Ascending aorta (tissue), 2 donors: ENCODE measurements at regions of chr19 and their contacts with region 1.

Region 1: GRCh38 chr19:22532388-22533300 is 101.5 kb upstream of the ZNF492 start:
- DNase-seq: peak; percentile 95 to 98
- H3K4me3 ChIP-seq: peak overlapping the region; percentile 47 to 81
- H3K27ac ChIP-seq: peak overlapping the region; percentile 69 to 89
- H3K4me1 ChIP-seq: peaks cover 0 to 9% of the 10 kb centered on the region in 2 donors
- H3K27me3 ChIP-seq: no peaks in the 10 kb centered on the region
- CTCF ChIP-seq: peak in 2 of 3 experiments; percentile 6 to 38

Region 2: DNA sequence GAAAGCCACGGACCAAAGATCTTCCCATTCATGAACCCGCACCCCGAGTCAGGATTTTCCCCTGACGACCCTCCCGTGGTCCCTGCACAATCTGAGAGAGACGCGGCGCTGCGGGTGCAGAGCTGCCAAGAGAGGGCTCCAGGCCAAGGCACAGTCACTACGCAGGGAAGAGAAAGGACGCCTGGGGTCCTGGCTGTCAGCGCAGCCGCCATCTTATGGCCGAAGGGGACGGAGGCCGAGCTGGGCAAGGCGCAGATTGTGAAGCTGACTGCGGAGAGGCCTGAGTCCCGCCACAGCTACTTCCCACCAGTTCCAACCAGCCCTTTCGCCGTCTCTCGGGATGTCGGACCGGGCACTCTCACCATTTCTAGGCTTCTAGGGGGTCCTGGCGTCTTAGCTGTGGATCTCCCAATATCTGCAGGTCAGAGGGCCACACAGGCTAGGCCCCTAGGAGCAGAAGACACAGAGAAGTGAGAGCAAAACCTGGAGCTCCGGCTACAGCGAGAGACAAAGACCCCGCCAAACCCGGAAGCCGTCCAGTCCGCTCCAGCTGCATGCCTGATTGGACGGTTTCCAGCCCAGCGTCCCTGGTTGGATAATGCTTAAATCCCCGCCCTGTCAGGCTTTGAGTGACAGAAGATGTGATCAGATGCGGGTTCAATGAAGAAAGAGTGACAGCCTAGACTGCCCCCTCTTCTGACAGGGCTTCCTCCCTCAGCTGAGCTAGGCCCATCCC is 765.4 kb before region 1 on chr19 and contains the start of gene ZNF100:
- intact Hi-C with region 1: loop called (anchors 5 kb)
- DNase-seq: peak; percentile 76 to 96
- H3K4me3 ChIP-seq: peak within 1 kb of the TSS; percentile 59 to 86
- H3K27ac ChIP-seq: peak within 1 kb of the TSS; percentile 88 to 89
- H3K4me1 ChIP-seq: peaks cover 0 to 3% of the 10 kb centered on the region in 2 donors
- H3K27me3 ChIP-seq: no peaks in the 10 kb centered on the region
- CTCF ChIP-seq: no peak
- total RNA-seq, gene ZNF100: 4.2 TPM

Region 3: DNA sequence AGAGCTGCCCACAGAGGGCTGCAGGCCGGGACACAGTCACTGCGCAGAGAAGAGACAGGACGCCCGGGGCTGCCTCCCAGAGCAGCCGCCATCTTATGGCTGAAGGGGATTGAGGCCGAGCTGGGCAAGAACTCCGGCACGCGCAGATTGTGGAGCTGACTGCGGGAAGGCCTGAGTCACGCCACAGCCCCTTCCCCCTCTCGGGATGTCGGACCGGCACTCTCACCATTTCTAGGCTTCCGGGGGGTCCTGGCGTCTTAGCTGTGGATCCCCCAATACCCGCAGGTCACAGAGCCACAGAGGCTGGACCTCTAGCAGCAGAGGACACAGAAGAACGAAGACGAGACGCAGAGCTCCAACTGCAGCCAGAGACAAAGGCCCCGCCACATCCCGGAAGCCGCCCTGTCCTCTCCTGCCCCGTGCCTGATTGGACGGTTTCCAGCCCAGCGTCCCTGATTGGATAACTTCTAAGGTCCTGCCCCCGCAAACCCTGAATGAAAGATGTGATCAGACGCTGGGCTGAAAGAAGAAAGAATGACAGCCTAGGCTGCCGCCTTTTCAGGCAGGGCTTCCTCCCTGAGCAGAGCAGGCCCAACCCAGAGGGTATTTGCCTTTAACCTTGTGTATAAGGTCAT is 696.7 kb before region 1 on chr19 and contains the start of gene ZNF43:
- intact Hi-C with region 1: loop called (anchors 5 kb)
- DNase-seq: peak; percentile 93 to 98
- H3K4me3 ChIP-seq: peak within 1 kb of the TSS; percentile 88 to 91
- H3K27ac ChIP-seq: peak within 1 kb of the TSS; percentile 77 to 91
- H3K4me1 ChIP-seq: peaks cover 3 to 7% of the 10 kb centered on the region in 2 donors
- H3K27me3 ChIP-seq: no peaks in the 10 kb centered on the region
- CTCF ChIP-seq: no peak
- total RNA-seq, gene ZNF43: 8.4 TPM

Region 4: DNA sequence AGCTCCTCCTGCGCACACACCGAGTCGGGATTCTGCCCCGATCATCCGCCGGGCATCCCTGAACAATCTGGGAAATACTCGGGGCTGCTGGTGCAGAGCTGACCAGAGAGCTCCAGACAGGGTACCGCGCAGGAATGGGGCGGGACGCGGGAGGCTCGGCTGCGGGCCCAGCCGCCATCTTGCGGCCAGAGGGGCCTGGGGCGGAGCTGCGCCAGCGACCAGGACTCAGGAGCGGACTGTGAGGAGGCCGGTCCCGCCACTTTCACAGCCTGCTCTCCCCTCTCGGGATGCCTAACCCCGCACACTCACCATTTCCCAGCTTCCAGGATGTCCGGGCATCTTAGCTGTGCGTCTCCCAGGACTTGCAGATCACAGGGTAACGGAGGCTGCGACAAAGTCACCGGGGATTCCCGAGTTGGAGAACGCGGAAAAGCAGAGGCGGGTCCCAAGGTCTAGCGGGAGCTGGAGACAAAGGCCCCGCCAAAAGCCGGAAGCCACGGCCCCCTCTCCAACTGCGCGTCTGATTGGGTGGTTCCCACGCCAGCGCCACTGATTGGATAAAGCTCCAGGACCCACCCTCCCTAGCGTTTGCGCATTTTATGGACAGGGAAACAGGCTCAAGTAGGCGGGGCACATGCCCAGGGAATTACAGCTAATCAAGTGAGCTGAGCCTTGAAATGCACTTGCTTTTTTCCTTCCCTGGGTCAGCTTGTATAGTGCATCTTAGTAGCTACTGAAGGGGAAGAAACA is 680.9 kb before region 1 on chr19:
- intact Hi-C with region 1: loop called (anchors 5 kb)
- DNase-seq: peak; percentile 85 to 98
- H3K4me3 ChIP-seq: peak overlapping the region; percentile 80 to 81
- H3K27ac ChIP-seq: peak overlapping the region; percentile 74 to 81
- H3K4me1 ChIP-seq: peaks cover 0 to 9% of the 10 kb centered on the region in 2 donors
- H3K27me3 ChIP-seq: no peaks in the 10 kb centered on the region
- CTCF ChIP-seq: peak in 1 of 3 experiments; percentile 1

Region 5: GRCh38 chr19:22622901-22623840 is 90.5 kb after region 1 on chr19:
- intact Hi-C with region 1: loop called (anchors 5 kb)
- DNase-seq: peak in 1 of 2 donors; percentile 74
- H3K4me3 ChIP-seq: peak overlapping the region; percentile 43 to 85
- H3K27ac ChIP-seq: peak overlapping the region; percentile 51 to 64
- H3K4me1 ChIP-seq: peaks cover 0 to 4% of the 10 kb centered on the region in 2 donors
- H3K27me3 ChIP-seq: no peaks in the 10 kb centered on the region
- CTCF ChIP-seq: peak in 2 of 3 experiments; percentile 54 to 58

Region 6: DNA sequence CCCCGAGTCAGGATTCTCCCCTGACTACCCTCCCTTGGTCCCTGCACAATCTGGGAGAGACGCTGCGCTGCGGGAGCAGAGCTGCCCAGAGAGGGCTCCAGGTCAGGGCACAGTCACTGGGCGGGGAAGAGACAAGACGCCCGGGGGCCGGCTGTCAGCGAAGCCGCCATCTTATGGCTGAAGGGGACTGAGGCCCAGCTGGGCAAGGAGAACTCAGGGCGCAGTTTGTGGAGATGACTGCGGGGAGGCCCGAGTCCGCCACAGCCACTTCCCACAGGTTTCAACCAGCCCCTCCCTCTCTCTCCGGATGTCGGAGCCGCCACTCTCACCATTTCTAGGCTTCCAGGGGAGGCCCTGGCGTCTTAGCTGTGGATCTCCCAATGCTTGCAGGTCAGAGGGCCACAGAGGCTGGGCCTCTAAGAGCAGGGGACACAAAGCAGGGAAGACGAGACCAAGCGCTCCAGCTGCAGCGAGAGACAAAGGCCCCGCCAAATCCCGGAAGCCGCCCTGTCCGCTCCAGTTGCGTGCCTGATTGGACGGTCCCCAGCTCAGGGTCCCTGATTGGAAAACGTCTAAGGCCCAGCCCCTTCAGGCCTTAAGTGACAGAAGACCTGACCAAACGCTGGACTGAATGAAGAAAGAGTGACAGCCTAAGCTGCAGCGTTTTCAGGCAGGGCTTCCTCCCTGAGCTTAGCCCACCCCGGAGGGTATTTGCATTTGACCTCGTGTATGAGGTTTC is 717.4 kb after region 1 on chr19 and contains the start of gene ZNF724:
- intact Hi-C with region 1: loop called (anchors 10 kb)
- DNase-seq: peak; percentile 69 to 94
- H3K4me3 ChIP-seq: peak within 1 kb of the TSS; percentile 67 to 88
- H3K27ac ChIP-seq: peak within 1 kb of the TSS in 1 of 2 donors; percentile 57
- H3K4me1 ChIP-seq: peaks cover 6 to 7% of the 10 kb centered on the region in 2 donors
- H3K27me3 ChIP-seq: no peaks in the 10 kb centered on the region
- CTCF ChIP-seq: no peak
- total RNA-seq, gene ZNF724: not detected